HCT116 (cell line): ENCODE measurements at regions of chr11 and their contacts with region 1.

Region 1: GRCh38 chr11:95024958-95025357 is at the start of gene KDM4E:
- DNase-seq: no peak
- ATAC-seq: no peak
- H3K4me3 ChIP-seq: no peak within 1 kb of the TSS
- H3K27ac ChIP-seq: no peak within 1 kb of the TSS
- H3K4me1 ChIP-seq: no peaks in the 10 kb centered on the region
- H3K27me3 ChIP-seq: no peaks in the 10 kb centered on the region; the same call in 1 of the 2 replicates
- CTCF ChIP-seq: no peak
- POLR2A ChIP-seq: no peak
- RAD21 ChIP-seq: no peak
- total RNA-seq, gene KDM4E: not detected

Region 2: DNA sequence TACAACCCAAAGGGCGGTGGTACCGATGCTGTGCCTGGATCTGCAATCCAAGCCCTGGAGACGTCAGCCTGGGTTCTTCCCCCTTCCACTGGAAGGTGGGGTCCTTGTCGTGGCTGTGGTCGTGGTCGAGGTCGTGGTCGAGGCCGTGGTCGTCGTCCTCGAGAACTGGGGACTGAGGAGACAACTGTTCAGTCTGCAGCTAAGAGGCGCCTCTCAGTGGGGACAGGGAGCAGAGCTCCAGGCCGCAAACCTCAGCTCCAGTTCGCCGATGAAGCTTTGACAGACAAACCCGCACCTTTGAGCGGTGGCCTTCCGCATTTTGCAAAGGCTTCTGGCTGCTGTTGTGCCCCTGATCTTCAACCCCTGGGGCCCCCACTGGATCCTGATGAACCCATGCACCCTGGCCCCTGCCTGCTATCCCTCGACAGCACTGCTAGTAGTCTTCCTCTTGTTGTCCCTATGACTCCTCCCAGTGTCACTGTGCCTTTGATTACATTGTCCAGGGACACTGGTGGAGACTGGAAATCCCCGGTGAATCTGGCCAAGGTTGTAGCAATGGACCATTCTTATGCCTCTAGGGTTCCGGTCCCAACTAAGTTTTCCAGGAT is 25.7 kb after region 1 on chr11:
- CTCF ChIA-PET with region 1: no interaction called
- POLR2A ChIA-PET with region 1: no interaction called
- RAD21 ChIA-PET with region 1: no interaction called
- intact Hi-C with region 1: loop called (anchors 1 kb)
- DNase-seq: no peak
- ATAC-seq: no peak
- H3K4me3 ChIP-seq: no peak overlapping the region
- H3K27ac ChIP-seq: no peak overlapping the region
- H3K4me1 ChIP-seq: no peaks in the 10 kb centered on the region
- H3K27me3 ChIP-seq: peaks cover 4% of the 10 kb centered on the region
- CTCF ChIP-seq: no peak
- POLR2A ChIP-seq: no peak
- RAD21 ChIP-seq: no peak